ENCODE measurements at regions of chr2 and their contacts with region 1.

Region 1: DNA sequence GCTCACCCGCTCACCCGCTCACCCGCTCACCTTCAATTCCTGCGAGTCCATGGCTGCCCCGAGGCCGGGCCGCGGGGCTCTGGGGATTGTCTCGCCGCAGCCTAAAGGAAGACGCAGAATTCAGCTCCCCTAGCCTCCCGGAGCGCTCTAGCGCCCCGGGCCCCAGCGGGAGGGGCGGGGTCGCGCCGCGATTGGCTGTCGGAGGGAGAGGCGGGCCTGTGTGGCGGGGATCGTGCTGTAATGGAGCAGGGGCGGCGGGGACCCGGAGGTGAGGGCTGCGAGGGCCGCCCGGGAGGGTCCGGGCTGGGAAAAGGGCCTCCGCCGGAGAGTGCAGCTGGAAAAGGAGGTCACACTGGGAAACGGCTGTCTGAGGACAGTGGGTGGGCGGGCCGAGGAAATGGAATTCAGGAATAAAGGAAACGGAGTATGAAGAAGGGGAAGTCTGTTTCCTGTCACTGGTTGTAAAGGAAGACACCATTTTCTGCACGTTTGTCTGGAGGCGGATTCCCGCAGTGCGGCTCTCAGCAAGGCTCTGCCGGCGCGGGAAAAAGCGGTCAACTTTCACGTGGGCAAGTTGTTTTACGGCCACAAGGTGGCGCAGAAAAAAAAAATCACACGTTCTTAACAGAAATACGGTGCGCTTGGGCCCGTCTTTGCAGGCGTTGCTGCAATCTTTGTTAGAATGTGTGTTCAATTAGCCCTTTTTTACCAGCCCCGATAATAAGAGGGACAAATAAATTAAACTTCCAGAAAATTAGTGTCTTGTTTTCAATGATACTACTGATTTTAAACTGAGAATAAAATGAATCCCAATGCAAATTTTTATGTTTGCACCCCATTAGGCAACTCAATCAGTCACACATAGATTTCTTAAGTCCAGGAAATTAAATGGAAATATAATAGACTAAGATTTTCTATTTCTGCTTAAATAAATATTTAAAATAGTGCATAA is at the start of gene TTC21B:
- DNase-seq: peak; percentile 69
- H3K4me3 ChIP-seq: peak within 1 kb of the TSS; percentile 57
- H3K27me3 ChIP-seq: no peaks in the 10 kb centered on the region
- CTCF ChIP-seq: peak; percentile 73
- polyA plus RNA-seq, gene TTC21B: 12.1 and 21.1 TPM in 2 replicates

Region 2: DNA sequence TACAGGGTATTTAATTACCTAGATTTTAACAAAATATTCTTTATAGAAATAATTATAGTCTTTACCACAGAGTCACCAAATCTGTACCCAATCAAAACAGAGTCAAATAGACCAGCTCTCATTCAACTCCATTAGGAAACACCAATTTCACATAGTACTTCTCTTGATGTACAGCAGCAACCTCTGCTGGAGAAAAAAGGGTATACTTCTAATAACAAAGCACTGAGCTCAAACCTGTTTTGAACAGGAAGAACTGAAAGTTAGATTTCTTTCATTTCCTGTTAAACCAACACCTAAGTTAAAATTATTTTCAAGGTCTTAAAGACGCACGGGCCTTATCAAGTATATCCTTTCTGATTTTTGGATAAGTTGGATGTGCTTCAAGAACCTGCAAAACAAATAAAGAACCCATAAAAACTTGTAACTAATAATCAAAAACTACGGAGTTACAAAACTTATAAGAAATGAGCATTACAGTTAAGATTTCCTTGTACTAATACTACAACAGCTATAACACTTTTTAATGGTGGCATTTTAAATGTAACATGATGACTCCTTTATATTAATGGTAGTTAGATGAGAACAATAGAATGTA is 79.4 kb before region 1 on chr2:
- CTCF ChIA-PET with region 1: no interaction called
- POLR2A ChIA-PET with region 1: no interaction called
- DNase-seq: no peak
- H3K4me3 ChIP-seq: no peak overlapping the region
- H3K27me3 ChIP-seq: no peaks in the 10 kb centered on the region
- CTCF ChIP-seq: peak; percentile 70

Region 3: GRCh38 chr2:165927353-165927752 is 26.6 kb before region 1 on chr2:
- CTCF ChIA-PET with region 1: interaction called, 10 read pairs
- POLR2A ChIA-PET with region 1: no interaction called
- DNase-seq: no peak
- H3K4me3 ChIP-seq: no peak overlapping the region
- H3K27me3 ChIP-seq: no peaks in the 10 kb centered on the region
- CTCF ChIP-seq: no peak

Region 4: GRCh38 chr2:166090908-166091307 is 137.0 kb after region 1 on chr2:
- CTCF ChIA-PET with region 1: no interaction called
- POLR2A ChIA-PET with region 1: interaction called, 13 read pairs
- DNase-seq: no peak
- H3K4me3 ChIP-seq: no peak overlapping the region
- H3K27me3 ChIP-seq: no peaks in the 10 kb centered on the region
- CTCF ChIP-seq: no peak